PC-3 (cell line): ENCODE measurements at regions of chr16 and their contacts with region 1.

Region 1: DNA sequence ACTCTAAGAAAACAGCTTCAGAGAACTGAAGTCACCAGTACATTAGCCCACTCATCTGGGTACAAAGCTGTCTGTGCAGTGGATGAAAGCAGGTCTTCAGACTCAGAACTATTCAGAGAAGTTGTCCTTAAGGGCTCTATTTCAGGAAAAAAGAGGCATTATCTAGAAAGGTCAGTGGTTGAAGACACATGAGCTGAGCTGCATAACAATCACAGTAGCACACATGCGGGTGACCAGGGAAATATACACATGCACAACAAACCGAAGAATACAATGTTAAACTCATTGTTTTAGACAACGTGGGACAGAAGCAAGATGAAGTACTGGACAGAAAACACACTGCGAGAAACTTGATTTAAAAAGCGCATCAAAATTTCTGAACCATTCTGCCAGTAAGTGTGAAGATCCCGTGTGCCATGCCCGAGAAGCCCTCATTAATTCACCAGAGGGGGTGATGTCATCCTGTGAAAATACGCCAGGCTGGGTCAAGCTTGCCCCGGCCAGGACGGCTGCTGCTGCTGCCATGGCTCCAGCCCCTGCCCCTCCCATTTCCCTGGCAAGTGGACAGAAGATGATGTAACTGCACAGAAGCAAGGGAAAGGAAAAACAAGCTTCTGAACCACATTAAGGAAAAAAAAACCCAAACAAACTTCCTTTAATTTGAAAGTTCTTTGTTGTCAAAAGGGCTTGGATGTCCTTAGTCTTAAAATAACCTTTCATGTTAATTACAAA is 10.1 kb downstream of the DYNC1LI2 start:
- DNase-seq: peak; percentile 74
- ATAC-seq: peak; percentile 91
- H3K4me3 ChIP-seq: no peak overlapping the region
- H3K27ac ChIP-seq: peak overlapping the region; percentile 48
- H3K4me1 ChIP-seq: peaks cover 24% of the 10 kb centered on the region
- H3K27me3 ChIP-seq: no peaks in the 10 kb centered on the region
- CTCF ChIP-seq: no peak

Region 2: DNA sequence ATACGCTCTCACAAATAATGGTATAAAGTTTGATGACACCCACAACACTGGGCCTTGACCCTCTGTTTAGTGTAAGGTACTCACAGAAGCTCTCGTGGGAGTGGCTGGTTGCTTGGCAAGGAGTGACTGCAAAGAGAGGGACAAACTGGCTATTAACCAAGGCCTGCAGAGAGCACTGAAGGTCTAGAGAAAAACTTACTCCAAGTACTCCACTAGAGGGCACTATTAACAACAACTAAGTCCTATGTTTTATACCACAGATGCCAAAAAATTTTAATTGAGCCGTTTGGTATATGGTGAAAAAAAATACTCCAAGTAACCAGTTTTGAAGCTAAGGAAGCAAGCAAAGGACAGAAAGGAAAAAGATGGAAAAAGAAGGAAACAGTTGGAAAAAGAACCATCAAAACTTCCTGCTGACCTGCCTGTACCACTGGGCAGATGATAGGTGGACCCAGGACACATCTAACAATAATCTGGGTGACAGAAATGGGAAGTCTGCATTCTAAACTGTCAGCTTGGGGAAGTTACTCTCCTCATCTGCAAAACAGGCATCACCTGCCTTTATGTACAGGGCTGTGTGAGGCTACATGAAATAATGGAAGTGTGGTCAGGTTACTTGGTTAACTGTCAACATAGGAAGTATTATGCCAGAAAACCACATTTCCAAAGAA is 13.1 kb before region 1 on chr16:
- CTCF ChIA-PET with region 1: interaction called, 18 read pairs
- POLR2A ChIA-PET with region 1: no interaction called
- intact Hi-C with region 1: no loop called
- DNase-seq: peak; percentile 66
- ATAC-seq: peak; percentile 75
- H3K4me3 ChIP-seq: no peak overlapping the region
- H3K27ac ChIP-seq: no peak overlapping the region
- H3K4me1 ChIP-seq: no peaks in the 10 kb centered on the region
- H3K27me3 ChIP-seq: no peaks in the 10 kb centered on the region
- CTCF ChIP-seq: peak; percentile 69

Region 3: DNA sequence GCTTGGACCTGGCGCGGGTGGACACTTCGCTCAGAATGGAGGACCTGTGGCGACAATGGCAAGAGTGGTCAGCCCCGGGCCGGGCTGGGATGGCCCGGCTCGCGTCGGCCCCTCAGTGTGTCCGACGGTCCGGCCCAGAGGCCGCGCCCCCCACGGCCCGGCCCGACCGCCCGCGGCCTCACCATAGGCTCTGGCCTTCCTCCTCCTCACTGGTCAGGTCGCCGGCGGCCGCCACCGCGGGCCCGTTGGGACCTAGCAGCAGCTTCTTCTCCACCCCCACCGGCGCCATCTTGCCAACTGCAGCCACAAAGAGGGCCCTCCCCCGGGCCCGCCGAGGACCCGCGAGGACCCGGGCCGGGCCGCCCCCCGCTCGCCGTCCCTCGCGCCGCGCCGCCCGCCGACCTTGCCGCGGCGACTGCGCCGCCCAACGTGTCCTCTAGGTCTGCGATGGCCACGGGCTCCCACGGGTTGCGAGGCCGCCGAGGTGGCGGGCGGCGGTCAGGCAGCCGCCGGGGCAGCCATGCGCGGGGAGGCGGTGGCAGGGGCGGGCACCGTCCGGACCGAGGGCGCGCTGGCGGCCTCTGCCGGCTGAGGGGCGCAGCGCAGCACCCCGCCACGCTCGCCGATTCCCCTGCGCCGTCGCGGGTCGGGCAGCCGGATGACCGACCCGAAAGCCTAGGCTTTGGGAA is 10.1 kb after region 1 on chr16 and contains the start of gene DYNC1LI2:
- CTCF ChIA-PET with region 1: interaction called, 4 read pairs
- POLR2A ChIA-PET with region 1: interaction called, 16 read pairs
- intact Hi-C with region 1: no loop called
- DNase-seq: peak; percentile 74
- ATAC-seq: peak; percentile 89
- H3K4me3 ChIP-seq: peak within 1 kb of the TSS; percentile 99
- H3K27ac ChIP-seq: peak within 1 kb of the TSS; percentile 40; the same call in 1 of the 2 replicates
- H3K4me1 ChIP-seq: peaks cover 20% of the 10 kb centered on the region
- H3K27me3 ChIP-seq: no peaks in the 10 kb centered on the region
- CTCF ChIP-seq: peak; percentile 58
- total RNA-seq, gene DYNC1LI2: 63.9 and 82.8 TPM in 2 replicates

Region 4: DNA sequence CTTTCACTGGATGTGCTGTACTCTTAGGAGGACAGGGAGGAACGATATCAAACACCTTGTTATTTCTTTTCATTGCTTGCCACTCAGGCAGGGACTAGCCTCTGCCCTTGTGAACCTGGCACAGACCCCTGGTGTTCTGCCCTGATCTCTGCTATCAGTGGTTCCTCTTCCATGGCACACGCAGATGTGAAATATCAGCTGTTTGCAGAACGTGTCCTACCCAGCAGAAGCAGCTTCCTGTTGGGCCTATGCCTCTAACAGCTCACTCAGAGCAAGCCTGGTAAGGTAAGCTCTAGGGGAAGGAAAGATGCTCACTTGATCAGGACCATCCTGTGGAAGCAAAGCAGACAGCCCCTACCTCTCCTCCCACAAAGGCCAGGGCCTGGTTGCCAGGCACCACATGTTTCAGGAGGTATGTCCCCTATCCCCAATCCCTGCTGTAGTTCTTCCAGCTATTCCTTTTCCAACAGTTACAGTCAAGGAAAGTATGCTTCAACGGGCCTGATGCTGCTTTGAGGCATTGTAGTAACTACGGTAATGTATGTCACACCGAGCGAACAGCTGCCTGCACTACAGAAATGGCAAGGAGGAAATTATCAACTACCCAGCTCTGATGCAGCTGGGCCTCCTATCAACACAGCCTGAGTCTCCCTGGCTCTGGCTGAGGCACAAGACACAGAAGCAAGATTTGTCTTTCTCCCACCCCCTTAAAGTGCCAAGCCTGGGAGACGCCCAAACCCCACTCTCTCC is 1019.0 kb after region 1 on chr16:
- CTCF ChIA-PET with region 1: no interaction called
- POLR2A ChIA-PET with region 1: no interaction called
- intact Hi-C with region 1: no loop called
- DNase-seq: no peak
- ATAC-seq: no peak
- H3K4me3 ChIP-seq: no peak overlapping the region
- H3K27ac ChIP-seq: no peak overlapping the region
- H3K4me1 ChIP-seq: no peaks in the 10 kb centered on the region
- H3K27me3 ChIP-seq: no peaks in the 10 kb centered on the region
- CTCF ChIP-seq: no peak